GM13976 (cell line): ENCODE measurements at regions of chr2 and their contacts with region 1.

Region 1: DNA sequence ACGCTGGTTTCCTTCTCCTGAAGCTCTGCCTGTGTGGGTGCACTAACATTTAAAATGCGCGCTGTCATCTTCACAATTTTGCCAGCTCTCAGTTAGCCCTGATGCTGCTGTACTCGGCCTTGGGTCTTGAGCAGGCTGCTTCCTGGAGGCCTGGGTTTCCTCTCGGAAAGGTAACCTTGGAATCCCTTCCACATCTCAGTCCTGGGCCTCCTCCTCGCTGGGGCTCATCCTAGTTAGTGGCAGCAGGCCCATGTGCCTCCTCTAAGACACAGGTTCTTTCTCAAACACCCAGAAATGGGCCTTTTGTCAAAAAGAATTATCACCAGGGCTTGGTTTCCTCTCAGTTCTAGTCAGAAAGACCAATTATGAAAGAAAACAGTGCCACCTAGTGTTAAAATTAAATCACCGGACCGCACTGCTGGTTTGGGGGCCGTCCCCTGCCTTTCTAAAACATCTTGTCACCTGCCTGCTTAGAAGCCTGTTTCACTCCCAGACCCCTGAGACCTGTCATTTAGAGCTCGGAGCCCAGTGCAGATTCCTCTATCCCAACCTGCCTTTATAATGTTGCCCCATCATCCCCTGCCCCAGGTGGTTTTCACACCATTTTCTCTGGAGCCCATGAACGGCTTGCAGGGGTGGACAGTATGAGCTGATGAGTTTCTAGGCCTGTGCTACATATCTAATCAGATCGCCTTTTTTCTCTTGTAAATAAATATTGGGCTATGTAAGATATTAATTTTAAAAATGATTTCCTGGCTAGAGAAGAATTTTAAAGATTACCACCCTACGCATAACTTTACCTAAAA is 42.4 kb downstream of the HK2 start:
- DNase-seq: peak; percentile 80
- CTCF ChIP-seq: peak; percentile 55

Region 2: GRCh38 chr2:74708883-74709282 is 167.4 kb before region 1 on chr2:
- in situ Hi-C with region 1: loop called (anchors 5 kb)
- DNase-seq: no peak
- CTCF ChIP-seq: no peak

Region 3: GRCh38 chr2:75035444-75036353 is 159.4 kb after region 1 on chr2:
- in situ Hi-C with region 1: no loop called
- DNase-seq: no peak
- CTCF ChIP-seq: no peak